ENCODE measurements at regions of chr15 and their contacts with region 1.

Region 1: GRCh38 chr15:69673291-69673881 is 220.8 kb downstream of the RPLP1 start:
- DNase-seq: no peak
- ATAC-seq: no peak
- H3K4me3 ChIP-seq: no peak overlapping the region
- H3K4me3 Mint-ChIP-seq: no peak overlapping the region
- H3K27ac ChIP-seq: no peak overlapping the region
- H3K27ac Mint-ChIP-seq: no peak overlapping the region
- H3K4me1 ChIP-seq: peaks cover 9 to 30% of the 10 kb centered on the region in 2 experiments
- H3K4me1 Mint-ChIP-seq: peaks cover 21 to 27% (median 26%) of the 10 kb centered on the region in 3 donors
- H3K27me3 ChIP-seq: no peaks in the 10 kb centered on the region
- H3K27me3 Mint-ChIP-seq: peaks cover 7 to 12% of the 10 kb centered on the region in 2 donors

Region 2: DNA sequence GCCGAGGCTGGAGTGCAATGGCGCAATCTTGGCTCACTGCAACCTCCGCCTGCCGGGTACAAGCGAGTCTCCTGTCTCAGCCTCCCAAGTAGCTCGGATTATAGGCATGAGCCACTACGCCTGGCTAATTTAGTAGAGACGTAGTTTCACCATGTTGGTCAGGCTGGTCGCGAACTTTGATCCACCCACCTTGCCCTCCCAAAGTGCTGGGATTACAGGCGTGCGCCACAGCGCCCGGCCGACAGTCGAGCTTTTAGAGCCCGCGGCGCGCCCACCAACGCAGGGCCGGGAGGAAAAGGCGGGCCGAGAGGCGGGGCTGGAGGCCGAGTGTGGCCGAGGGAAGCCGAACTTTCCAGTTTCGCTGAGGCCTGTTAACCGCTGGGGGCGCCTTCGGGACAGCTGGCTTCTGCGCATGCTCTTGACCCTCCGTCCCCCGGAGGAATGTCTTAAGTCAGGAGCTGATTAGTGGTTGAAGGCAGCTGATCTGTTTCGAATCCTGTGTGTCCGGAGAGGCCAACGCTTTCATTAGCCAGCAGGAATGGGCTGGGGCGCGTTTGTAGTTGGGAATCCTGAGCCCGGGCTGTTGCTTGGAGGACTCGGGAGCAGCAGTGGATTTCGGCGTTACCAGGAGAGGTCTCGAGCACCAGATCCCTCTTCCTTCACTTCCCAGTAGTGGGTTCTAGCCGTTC is 210.7 kb before region 1 on chr15:
- CTCF ChIA-PET with region 1: no interaction called
- POLR2A ChIA-PET with region 1: no interaction called
- DNase-seq: peak; percentile 74 to 96 (median 87)
- ATAC-seq: peak; percentile 92 to 99 (median 99)
- H3K4me3 ChIP-seq: peak overlapping the region; percentile 57 to 70
- H3K4me3 Mint-ChIP-seq: peak overlapping the region; percentile 86 to 90 (median 87)
- H3K27ac ChIP-seq: peak overlapping the region; percentile 64
- H3K27ac Mint-ChIP-seq: peak overlapping the region; percentile 90
- H3K4me1 ChIP-seq: peaks cover under 1 to 38% of the 10 kb centered on the region in 2 experiments
- H3K4me1 Mint-ChIP-seq: peaks cover 26 to 54% (median 50%) of the 10 kb centered on the region in 3 donors
- H3K27me3 ChIP-seq: peaks cover 0 to 2% of the 10 kb centered on the region in 2 experiments
- H3K27me3 Mint-ChIP-seq: no peaks in the 10 kb centered on the region

Region 3: DNA sequence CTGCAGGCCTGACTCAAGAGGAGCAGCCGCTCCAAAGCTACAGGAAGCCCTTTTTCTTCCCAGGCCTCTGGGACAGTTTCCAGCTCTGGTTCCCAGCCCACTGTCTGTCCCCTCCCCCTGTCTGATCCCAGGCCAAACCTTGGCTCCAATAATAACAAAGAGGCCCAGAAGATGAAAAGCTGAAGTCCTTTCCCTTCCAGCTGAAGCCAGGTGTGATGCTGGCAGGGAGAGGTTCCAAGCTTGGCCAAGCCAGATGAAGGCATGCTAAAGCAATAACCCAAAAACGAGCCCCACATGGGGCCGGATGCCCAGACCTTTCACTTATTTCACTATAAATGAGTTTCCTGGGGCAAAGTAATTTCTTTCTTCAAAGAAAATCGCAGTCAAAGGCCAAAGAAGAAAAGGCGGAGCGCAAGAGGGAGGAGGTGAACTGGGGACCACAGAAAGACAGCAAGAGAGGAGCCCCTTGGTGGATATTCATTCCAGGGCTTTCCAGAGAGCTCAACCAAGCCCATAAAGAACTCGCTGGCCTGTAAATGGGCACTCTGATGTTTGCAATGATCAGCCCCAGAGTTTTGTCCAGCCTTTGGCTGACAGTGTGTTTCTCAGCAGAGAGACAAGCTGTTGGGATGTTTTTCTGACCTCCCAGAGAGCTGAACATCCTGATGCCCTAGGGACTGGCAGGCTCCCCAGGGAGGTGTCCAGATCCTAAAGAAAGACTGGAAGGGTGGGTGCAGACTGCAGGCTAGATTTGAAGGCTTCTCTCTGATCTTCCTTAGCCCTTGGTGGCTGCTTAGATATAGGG is 932.4 kb after region 1 on chr15:
- CTCF ChIA-PET with region 1: no interaction called
- POLR2A ChIA-PET with region 1: interaction called in 1 of 2 experiments, 13 read pairs
- DNase-seq: no peak
- ATAC-seq: no peak
- H3K4me3 ChIP-seq: no peak overlapping the region
- H3K4me3 Mint-ChIP-seq: no peak overlapping the region
- H3K27ac ChIP-seq: no peak overlapping the region
- H3K27ac Mint-ChIP-seq: no peak overlapping the region
- H3K4me1 ChIP-seq: no peaks in the 10 kb centered on the region
- H3K4me1 Mint-ChIP-seq: no peaks in the 10 kb centered on the region
- H3K27me3 ChIP-seq: peaks cover 0 to 10% of the 10 kb centered on the region in 2 experiments
- H3K27me3 Mint-ChIP-seq: peaks cover 0 to 4% of the 10 kb centered on the region in 2 donors